ENCODE measurements at regions of chr14 and their contacts with region 1.

Region 1: GRCh38 chr14:74612350-74613021 is 449 bp upstream of the LTBP2 start:
- DNase-seq: peak; percentile 81 to 89 (median 89)
- H3K4me3 ChIP-seq: peak overlapping the region; percentile 54 to 81 (median 68)
- H3K27ac ChIP-seq: no peak overlapping the region
- H3K4me1 ChIP-seq: peaks cover 0 to 35% (median 22%) of the 10 kb centered on the region in 4 experiments
- H3K27me3 ChIP-seq: peaks cover 0 to 29% (median 7%) of the 10 kb centered on the region in 5 experiments

Region 2: GRCh38 chr14:74437496-74438053 is 174.9 kb before region 1 on chr14:
- CTCF ChIA-PET with region 1: no interaction called
- POLR2A ChIA-PET with region 1: no interaction called
- DNase-seq: peak; percentile 34 to 80 (median 65)
- H3K4me3 ChIP-seq: no peak overlapping the region
- H3K27ac ChIP-seq: no peak overlapping the region
- H3K4me1 ChIP-seq: peaks cover 0 to 6% (median 1%) of the 10 kb centered on the region in 4 experiments
- H3K27me3 ChIP-seq: peaks cover 0 to 5% (median 2%) of the 10 kb centered on the region in 5 experiments

Region 3: DNA sequence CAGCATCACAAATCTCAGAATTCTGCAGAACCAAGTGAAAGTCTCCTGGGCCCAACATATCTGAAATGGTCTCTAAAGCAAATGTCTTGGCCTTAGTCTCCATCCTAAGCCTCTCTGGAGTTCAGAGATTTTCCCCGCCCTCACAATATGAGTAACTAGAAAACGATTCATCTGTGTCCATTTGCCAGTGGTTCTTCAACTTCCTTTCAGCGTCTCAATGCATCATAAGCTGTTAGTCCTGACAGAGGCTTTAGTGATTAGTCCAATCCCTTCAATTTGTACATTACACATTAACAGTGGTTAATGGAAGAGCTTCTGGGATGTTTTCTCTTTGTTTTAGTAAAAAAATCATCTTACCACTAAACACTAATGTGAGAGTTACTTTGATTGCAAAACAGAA is 136.8 kb before region 1 on chr14:
- CTCF ChIA-PET with region 1: no interaction called
- POLR2A ChIA-PET with region 1: no interaction called
- DNase-seq: no peak
- H3K4me3 ChIP-seq: no peak overlapping the region
- H3K27ac ChIP-seq: no peak overlapping the region
- H3K4me1 ChIP-seq: no peaks in the 10 kb centered on the region
- H3K27me3 ChIP-seq: no peaks in the 10 kb centered on the region

Region 4: DNA sequence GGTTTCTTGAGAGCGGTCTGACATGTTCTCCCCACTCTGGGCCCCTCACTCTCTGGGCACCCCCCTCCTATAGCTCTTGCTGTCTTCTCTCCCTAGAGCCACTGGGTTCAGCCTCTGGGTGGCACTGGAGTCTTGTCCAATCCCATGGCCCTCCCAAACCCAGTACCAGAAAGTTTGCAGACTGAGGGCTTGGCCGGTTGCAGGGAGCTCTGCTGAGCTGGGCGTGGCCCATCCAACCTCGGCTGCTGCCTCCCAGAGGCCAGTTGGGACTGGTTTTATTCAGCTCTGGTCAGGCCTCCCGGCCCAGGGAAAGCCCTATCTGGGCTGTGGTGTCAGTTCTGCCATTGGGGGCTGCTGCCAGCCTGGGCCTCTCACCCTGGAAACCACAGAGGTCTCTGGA is 81.0 kb before region 1 on chr14:
- CTCF ChIA-PET with region 1: no interaction called
- POLR2A ChIA-PET with region 1: no interaction called
- DNase-seq: no peak
- H3K4me3 ChIP-seq: no peak overlapping the region
- H3K27ac ChIP-seq: no peak overlapping the region
- H3K4me1 ChIP-seq: peaks cover 0 to 9% (median 8%) of the 10 kb centered on the region in 4 experiments
- H3K27me3 ChIP-seq: no peaks in the 10 kb centered on the region

Region 5: GRCh38 chr14:74599321-74599761 is 13.1 kb before region 1 on chr14:
- CTCF ChIA-PET with region 1: interaction called, 20 read pairs
- POLR2A ChIA-PET with region 1: no interaction called
- DNase-seq: no peak
- H3K4me3 ChIP-seq: no peak overlapping the region
- H3K27ac ChIP-seq: no peak overlapping the region
- H3K4me1 ChIP-seq: no peaks in the 10 kb centered on the region
- H3K27me3 ChIP-seq: no peaks in the 10 kb centered on the region

Region 6: DNA sequence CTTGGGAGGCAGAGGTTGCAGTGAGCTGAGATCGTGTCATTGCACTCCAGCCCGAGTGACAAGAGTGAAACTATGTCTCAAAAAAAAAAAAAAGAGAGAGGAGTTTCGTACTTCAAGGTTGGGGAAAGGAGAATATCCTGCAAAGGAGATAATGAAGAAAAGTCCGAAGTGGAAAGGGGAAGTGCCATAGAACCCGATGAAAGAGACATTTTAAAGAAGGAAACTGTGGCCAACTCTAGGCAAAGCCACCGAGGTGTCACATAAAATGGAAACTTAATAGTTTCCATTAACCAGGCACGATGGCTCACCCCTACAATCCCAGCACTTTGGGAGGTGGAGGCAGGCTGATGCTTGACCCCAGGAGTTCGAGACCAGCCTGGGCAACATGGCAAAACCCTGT is 14.6 kb after region 1 on chr14:
- CTCF ChIA-PET with region 1: interaction called, 33 read pairs
- POLR2A ChIA-PET with region 1: no interaction called
- DNase-seq: peak; percentile 42 to 82 (median 80)
- H3K4me3 ChIP-seq: peak overlapping the region in 1 of 7 experiments; percentile 59
- H3K27ac ChIP-seq: no peak overlapping the region
- H3K4me1 ChIP-seq: peaks cover 0 to 5% (median 2%) of the 10 kb centered on the region in 4 experiments
- H3K27me3 ChIP-seq: no peaks in the 10 kb centered on the region

Region 7: DNA sequence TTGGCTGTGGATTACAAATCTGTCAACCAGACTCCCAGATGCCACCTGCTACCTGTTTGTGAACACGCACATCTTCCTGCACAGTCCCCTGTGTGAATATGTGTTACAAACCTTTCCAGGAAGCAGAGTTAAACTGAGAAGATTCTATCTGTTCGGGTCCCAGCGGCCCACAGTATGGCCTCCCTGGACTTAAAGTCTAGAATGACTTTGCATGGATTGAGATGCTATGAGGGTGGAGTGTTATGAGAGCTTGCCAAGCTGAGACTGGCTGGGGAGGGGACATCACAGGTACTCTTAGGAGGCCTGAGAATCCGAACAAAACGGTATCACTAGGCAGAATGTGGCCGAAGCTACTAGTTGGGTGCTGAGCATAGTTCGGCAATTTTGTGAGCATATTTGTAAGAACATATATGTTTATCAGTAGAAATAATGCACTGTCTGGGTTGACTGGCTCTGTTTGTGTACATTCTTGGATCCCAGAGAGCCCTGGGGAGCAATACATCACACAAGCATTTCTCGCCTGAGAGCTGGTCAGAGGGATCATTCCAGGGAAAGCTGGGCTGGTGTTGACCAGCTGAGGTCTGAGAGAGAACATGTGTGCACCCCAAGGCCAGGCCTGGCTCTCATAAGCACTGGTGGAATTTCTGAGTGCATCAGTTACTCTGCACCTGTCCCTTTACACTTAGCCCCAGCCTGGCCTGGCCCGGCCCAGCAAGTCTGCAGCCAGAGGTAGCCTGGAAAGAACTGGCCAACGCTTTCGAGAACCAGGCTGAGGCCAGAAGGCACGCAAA is 29.3 kb after region 1 on chr14:
- CTCF ChIA-PET with region 1: interaction called, 41 read pairs
- POLR2A ChIA-PET with region 1: no interaction called
- DNase-seq: no peak
- H3K4me3 ChIP-seq: no peak overlapping the region
- H3K27ac ChIP-seq: no peak overlapping the region
- H3K4me1 ChIP-seq: peaks cover 0 to 9% (median 0%) of the 10 kb centered on the region in 4 experiments
- H3K27me3 ChIP-seq: no peaks in the 10 kb centered on the region

Region 8: GRCh38 chr14:74684434-74684833 is 71.9 kb after region 1 on chr14:
- CTCF ChIA-PET with region 1: interaction called, 16 read pairs
- POLR2A ChIA-PET with region 1: no interaction called
- DNase-seq: peak; percentile 40 to 91 (median 86)
- H3K4me3 ChIP-seq: peak overlapping the region in 2 of 7 experiments; percentile 3 to 12
- H3K27ac ChIP-seq: no peak overlapping the region
- H3K4me1 ChIP-seq: peaks cover 32 to 52% (median 42%) of the 10 kb centered on the region in 4 experiments
- H3K27me3 ChIP-seq: no peaks in the 10 kb centered on the region

Region 9: GRCh38 chr14:74804219-74804826 is 191.8 kb after region 1 on chr14:
- CTCF ChIA-PET with region 1: interaction called, 92 read pairs
- POLR2A ChIA-PET with region 1: interaction called, 9 read pairs
- DNase-seq: peak; percentile 66 to 83 (median 75)
- H3K4me3 ChIP-seq: no peak overlapping the region
- H3K27ac ChIP-seq: no peak overlapping the region
- H3K4me1 ChIP-seq: no peaks in the 10 kb centered on the region
- H3K27me3 ChIP-seq: no peaks in the 10 kb centered on the region

Measured in common myeloid progenitor, CD34-positive (primary cell).